ENCODE measurements at regions of chr11 and their contacts with region 1.

Region 1: GRCh38 chr11:58524232-58525036 is 16.5 kb upstream of the OR5B21 start:
- DNase-seq: peak; percentile 69
- ATAC-seq: peak; percentile 69
- H3K4me3 Mint-ChIP-seq: peak overlapping the region; percentile 47
- H3K27ac Mint-ChIP-seq: peak overlapping the region; percentile 90
- H3K4me1 Mint-ChIP-seq: peaks cover 58% of the 10 kb centered on the region
- H3K27me3 Mint-ChIP-seq: no peaks in the 10 kb centered on the region

Region 2: GRCh38 chr11:57345555-57346211 is 1178.8 kb before region 1 on chr11:
- CTCF ChIA-PET with region 1: no interaction called
- POLR2A ChIA-PET with region 1: no interaction called
- intact Hi-C with region 1: loop called in 1 of 2 experiments (anchors 5 kb)
- DNase-seq: peak; percentile 84
- ATAC-seq: peak; percentile 87
- H3K4me3 Mint-ChIP-seq: no peak overlapping the region
- H3K27ac Mint-ChIP-seq: peak overlapping the region; percentile 52
- H3K4me1 Mint-ChIP-seq: peaks cover 5% of the 10 kb centered on the region
- H3K27me3 Mint-ChIP-seq: no peaks in the 10 kb centered on the region

Region 3: GRCh38 chr11:57741132-57742086 is 783.0 kb before region 1 on chr11 and contains the start of gene SELENOH:
- CTCF ChIA-PET with region 1: interaction called, 4 read pairs
- POLR2A ChIA-PET with region 1: no interaction called
- intact Hi-C with region 1: loop called (anchors 2 to 10 kb)
- DNase-seq: peak; percentile 98
- ATAC-seq: peak; percentile 94
- H3K4me3 Mint-ChIP-seq: peak within 1 kb of the TSS; percentile 98
- H3K27ac Mint-ChIP-seq: peak within 1 kb of the TSS; percentile 100
- H3K4me1 Mint-ChIP-seq: peaks cover 28% of the 10 kb centered on the region
- H3K27me3 Mint-ChIP-seq: no peaks in the 10 kb centered on the region
- total RNA-seq, gene SELENOH: 117 to 244 TPM

Region 4: GRCh38 chr11:58394195-58394594 is 130.2 kb before region 1 on chr11:
- CTCF ChIA-PET with region 1: interaction called, 3 read pairs
- POLR2A ChIA-PET with region 1: no interaction called
- intact Hi-C with region 1: loop called in 1 of 2 experiments (anchors 2 kb)
- DNase-seq: no peak
- ATAC-seq: no peak
- H3K4me3 Mint-ChIP-seq: no peak overlapping the region
- H3K27ac Mint-ChIP-seq: no peak overlapping the region
- H3K4me1 Mint-ChIP-seq: peaks cover 11% of the 10 kb centered on the region
- H3K27me3 Mint-ChIP-seq: peaks cover 4% of the 10 kb centered on the region

Region 5: DNA sequence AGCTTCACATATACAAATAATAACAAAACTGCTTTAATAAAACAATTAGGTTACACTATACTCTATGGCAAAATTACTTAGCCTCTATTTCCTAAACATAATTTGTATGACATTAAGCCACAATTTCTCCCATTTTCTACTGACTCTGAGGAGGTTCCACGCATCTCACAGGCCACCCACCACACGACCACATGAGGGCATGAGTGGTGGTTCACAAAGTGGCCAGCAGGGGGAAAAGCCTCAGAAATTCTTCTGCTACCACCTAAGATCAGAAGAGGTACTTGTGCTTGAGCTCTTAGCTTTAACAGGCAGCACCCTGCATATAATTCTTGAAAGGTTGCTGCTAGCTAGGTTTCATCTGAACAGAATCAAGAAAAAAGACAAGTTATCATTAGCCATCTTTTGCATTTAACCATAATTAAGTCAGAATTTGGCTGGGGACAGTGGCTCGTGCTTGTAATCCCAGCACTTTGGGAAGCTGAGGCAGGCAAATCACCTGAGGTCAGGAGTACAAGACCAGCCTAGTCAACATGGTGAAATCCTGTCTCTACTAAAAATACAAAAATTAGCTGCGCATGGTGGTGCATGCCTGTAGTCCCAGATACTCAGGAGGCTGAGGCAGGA is 43.6 kb after region 1 on chr11:
- CTCF ChIA-PET with region 1: interaction called, 45 read pairs
- POLR2A ChIA-PET with region 1: no interaction called
- intact Hi-C with region 1: loop called (anchors 1 kb)
- DNase-seq: peak; percentile 85
- ATAC-seq: peak; percentile 92
- H3K4me3 Mint-ChIP-seq: peak overlapping the region; percentile 32
- H3K27ac Mint-ChIP-seq: peak overlapping the region; percentile 76
- H3K4me1 Mint-ChIP-seq: peaks cover 64% of the 10 kb centered on the region
- H3K27me3 Mint-ChIP-seq: no peaks in the 10 kb centered on the region

Region 6: DNA sequence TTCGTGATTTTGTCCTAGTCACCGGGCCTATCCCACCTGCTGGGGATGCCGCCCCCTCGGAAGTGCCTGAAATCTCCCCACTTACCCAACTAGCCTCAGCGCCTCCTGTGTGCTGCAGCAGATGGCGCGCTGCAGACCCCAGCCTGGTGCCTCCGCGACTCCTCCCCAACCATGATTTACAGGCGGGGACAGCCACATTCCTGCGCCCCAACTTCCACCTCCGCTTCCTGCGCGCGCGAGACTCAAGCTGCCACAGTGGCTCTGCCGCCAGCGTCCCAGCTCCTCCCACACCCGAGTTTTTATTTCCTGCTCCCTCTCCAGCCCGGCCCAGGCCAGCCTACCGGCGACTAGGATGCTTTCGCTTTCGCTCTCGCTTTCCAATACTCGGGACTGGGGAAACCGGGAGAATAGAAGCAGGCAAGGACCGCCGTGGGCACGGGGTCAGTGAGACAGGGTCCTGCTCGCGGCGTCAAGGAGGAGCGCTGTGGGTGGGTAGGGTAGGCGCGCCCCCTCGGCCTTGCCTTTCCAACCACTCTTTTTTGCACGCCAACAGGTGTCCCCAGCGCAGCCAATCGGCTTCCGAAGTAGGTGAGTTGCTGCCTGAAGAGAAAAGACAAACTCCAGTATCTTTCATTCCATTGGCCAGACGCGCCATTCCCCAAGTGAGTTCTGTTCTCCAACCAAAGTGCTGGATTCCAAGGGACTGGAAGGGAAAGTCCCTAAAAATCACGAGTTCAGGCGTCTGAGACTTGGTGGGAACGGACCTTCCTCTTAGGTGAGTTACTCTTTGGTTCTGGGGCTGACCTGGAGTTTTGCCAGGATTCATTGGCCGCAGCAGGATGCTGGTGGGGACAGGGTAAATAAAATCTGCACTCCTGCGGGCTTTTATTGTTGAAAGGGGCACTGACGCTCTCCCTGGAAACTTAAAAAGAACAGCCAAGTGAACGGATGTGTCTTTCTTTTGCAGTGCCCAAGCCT is 618.4 kb after region 1 on chr11 and contains the start of gene FAM111A:
- CTCF ChIA-PET with region 1: no interaction called
- POLR2A ChIA-PET with region 1: no interaction called
- intact Hi-C with region 1: loop called in 1 of 2 experiments (anchors 5 kb)
- DNase-seq: peak; percentile 90
- ATAC-seq: peak; percentile 77
- H3K4me3 Mint-ChIP-seq: peak within 1 kb of the TSS; percentile 91
- H3K27ac Mint-ChIP-seq: peak within 1 kb of the TSS; percentile 93
- H3K4me1 Mint-ChIP-seq: peaks cover 47% of the 10 kb centered on the region
- H3K27me3 Mint-ChIP-seq: no peaks in the 10 kb centered on the region
- total RNA-seq, gene FAM111A: 87.9 to 135 TPM

Region 7: DNA sequence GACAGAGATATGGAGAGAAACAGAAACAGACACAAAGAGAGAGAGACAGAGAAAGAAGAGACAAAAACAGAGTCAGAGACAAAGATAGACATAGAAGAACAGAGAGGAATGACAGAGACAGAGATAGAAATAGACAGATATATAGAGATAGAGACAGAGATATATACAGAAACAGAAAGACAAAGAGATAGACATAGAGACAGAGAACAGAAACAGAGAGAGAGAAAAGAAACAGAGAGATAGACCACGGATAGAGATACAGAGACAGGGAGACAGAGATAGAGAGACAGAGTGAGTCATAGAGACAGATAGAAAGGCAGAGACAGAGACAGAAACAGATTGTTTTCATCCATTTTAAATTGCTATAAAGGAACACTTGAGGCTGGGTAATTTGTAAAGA is 700.6 kb after region 1 on chr11:
- CTCF ChIA-PET with region 1: no interaction called
- POLR2A ChIA-PET with region 1: no interaction called
- intact Hi-C with region 1: no loop called
- DNase-seq: no peak
- ATAC-seq: no peak
- H3K4me3 Mint-ChIP-seq: no peak overlapping the region
- H3K27ac Mint-ChIP-seq: no peak overlapping the region
- H3K4me1 Mint-ChIP-seq: peaks cover 12% of the 10 kb centered on the region
- H3K27me3 Mint-ChIP-seq: peaks cover 5% of the 10 kb centered on the region

Measured in activated CD4-positive, alpha-beta T cell treated with anti-CD3 and anti-CD28 coated beads for 36 hours (primary cell).